Right ventricle myocardium inferior (tissue), 1 donor: ENCODE measurements at regions of chr4 and their contacts with region 1.

Region 1: GRCh38 chr4:67545199-67546003 is at the start of gene CENPC:
- DNase-seq: peak; percentile 99
- ATAC-seq: peak; percentile 100
- total RNA-seq, gene CENPC: 7.3 TPM

Region 2: GRCh38 chr4:67344594-67345380 is 200.6 kb before region 1 on chr4:
- intact Hi-C with region 1: no loop called
- DNase-seq: no peak
- ATAC-seq: no peak

Region 3: GRCh38 chr4:67700738-67701516 is 155.5 kb after region 1 on chr4 and contains the start of gene UBA6:
- intact Hi-C with region 1: loop called (anchors 2 kb)
- DNase-seq: peak; percentile 97
- ATAC-seq: peak; percentile 100
- total RNA-seq, gene UBA6: 18.1 TPM

Region 4: DNA sequence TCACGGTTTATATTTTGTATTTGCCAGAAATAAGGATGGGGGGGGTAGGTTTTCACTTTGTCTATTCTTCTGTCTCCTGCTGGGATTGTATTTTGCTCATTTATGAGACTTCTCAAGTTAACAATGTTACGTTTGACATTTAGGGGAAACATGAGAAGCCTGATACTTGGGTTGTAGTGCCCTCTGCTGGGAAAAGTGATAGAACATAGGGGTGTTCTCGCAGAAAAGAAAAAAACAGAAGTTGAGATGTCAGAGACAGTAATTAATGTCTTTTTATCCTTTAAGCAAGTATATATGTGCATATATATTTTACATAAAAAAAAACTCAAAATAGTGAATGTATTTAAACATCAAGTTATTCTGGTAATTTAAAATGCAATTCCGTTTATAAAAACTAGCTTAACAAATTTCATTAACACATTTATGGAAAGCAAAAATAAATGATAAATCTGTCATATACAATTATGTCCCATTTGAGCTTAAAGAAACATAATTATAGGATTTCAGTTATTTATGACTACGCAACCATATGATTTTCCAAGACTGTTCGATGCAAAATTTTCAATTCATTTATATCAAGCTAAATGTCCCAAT is 630.3 kb after region 1 on chr4:
- intact Hi-C with region 1: loop called (anchors 5 kb)
- DNase-seq: no peak
- ATAC-seq: no peak

Region 5: DNA sequence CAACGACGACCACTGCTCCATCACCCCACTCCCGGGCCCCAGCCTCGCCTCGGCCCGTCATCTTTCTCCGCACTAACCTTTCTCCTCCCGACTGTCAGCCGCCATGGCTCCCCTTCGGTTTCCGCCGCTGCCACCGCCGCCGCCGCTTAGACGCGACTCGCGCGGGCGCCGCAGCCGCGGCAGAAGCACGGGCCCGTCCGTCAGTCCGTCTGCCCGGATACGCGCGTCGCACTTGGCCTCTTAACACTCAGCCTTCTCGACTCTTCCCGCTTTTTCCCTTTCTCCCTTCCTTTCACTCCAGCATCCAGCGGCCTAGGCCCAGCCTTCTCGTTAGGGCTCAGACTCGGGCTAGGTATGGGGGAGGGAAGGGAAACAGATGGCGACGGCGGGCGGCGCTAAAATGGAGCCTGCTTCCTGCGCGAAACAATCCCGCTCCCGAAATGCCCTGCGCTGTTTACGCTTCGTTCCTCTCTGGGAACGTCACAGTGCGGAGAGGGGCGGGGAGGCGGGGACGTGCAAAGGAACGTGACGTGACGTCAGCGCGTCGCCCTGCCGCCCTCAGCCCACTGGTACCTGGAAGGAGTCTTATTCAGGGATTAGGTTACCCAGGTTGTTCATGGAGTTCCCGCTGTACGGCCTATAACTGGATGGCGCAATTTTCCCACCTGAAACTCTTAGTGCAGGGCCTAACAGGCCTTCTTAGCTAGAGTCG is 804.4 kb after region 1 on chr4 and contains the start of gene YTHDC1:
- intact Hi-C with region 1: loop called (anchors 10 kb)
- DNase-seq: peak; percentile 98
- ATAC-seq: peak; percentile 99
- total RNA-seq, gene YTHDC1: 52.0 TPM